ENCODE measurements at regions of chr5 and their contacts with region 1.

Region 1: DNA sequence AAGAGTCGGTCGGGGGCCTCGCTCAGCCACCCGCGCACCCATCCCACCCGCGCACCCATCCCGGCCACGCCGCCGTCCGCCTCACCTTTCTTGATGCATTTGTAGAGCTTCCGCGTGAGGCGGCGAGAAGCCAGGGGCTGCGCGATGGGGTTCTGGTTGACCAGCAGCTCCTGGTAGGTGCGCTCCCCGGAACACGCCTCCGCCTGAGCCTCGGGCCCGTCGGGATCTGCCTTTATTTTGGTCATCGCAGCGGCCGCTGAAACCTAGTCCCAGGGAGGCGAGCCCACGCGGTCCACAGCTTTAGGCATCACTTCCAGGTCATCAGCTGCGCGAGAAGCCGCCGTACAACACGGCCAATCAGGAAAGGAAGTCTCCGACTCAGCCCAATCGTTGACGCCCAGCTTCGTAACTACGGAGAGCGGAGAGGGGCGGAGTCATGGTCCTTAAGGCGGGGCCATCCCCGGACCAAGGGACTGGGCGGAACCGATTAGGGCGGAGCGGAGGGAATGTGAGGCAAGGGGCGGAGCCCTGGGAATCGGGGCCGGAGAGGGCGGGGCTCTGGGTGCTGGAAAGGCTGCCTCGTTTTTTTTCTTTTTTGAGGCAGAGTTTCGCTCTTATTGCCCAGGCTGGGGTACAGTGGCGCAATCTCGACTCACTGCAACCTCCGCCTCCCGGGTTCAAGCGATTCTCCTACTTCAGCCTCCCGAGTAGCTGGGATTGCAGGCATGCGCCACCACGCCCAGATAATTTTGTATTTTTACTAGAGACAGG is at the start of gene NHP2:
- DNase-seq: peak; percentile 98
- H3K4me3 ChIP-seq: peak within 1 kb of the TSS; percentile 65
- H3K4me3 Mint-ChIP-seq: peak within 1 kb of the TSS; percentile 94
- H3K27ac Mint-ChIP-seq: peak within 1 kb of the TSS; percentile 92
- H3K4me1 ChIP-seq: peaks cover 5% of the 10 kb centered on the region
- H3K4me1 Mint-ChIP-seq: no peaks in the 10 kb centered on the region
- H3K27me3 ChIP-seq: no peaks in the 10 kb centered on the region
- H3K27me3 Mint-ChIP-seq: no peaks in the 10 kb centered on the region
- CTCF ChIP-seq: no peak
- total RNA-seq, gene NHP2: 127 and 142 TPM in 2 replicates

Region 2: DNA sequence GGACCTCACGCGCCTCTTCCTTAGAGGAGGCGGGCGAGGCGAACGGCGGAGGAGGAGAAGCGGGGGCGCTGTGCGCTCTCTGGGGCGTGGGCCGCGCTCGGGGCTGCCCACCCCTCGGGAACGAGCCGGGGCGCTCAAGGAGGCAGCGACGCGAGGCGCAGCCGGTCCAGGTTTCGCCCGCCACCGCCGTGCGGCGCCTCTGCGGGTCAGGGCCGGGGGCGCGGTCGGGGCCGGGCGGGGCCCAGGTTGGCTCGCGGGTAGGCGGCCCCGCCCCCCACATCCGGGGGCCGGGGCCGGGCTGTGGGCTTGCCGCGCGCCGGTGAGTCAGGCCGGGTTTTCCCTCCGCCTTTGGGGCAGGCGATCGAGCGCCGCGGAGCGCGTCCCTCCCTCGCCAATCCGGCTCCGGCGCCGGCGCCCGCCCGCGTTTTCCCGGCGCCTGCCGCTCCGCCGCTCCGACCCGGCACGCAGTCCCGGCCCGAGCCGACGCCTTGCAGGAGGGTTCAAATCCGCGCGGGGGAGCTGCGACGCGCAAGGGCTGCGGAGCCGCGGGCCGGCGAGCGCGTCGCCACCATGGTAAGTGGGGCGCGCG is 40.5 kb before region 1 on chr5 and contains the start of gene N4BP3:
- CTCF ChIA-PET with region 1: no interaction called
- POLR2A ChIA-PET with region 1: no interaction called
- intact Hi-C with region 1: loop called (anchors 5 kb)
- DNase-seq: peak; percentile 85 to 91
- H3K4me3 ChIP-seq: peak within 1 kb of the TSS; percentile 74
- H3K4me3 Mint-ChIP-seq: peak within 1 kb of the TSS; percentile 89
- H3K27ac Mint-ChIP-seq: peak within 1 kb of the TSS; percentile 16
- H3K4me1 ChIP-seq: peaks cover 19% of the 10 kb centered on the region
- H3K4me1 Mint-ChIP-seq: peaks cover 12% of the 10 kb centered on the region
- H3K27me3 ChIP-seq: no peaks in the 10 kb centered on the region
- H3K27me3 Mint-ChIP-seq: peaks cover 5% of the 10 kb centered on the region
- CTCF ChIP-seq: no peak
- total RNA-seq, gene N4BP3: 2.9 and 3.2 TPM in 2 replicates

Measured in Caco-2 (cell line).